MCF 10A (cell line): ENCODE measurements at regions of chr12 and their contacts with region 1.

Region 1: DNA sequence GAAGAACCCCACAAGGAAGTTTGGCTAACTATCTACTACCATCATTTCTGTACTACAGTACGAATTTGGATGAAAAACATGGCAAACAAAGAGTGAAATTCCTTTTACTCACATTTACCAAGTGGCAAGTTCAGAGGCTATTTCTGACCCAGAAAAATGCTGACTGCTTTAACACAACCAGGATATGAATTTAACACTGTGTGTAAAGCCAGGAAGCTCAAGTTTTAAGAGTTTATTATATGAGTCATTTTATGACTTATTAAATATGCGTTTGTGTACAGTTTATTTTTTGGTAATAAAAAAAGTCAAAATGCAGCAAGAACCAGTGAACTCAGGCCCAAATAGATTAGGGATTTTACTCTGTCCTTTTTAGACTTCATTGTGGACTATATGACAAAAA is 58.4 kb upstream of the STAC3 start:
- DNase-seq: no peak
- H3K4me3 Mint-ChIP-seq: no peak overlapping the region
- H3K27ac Mint-ChIP-seq: peak overlapping the region; percentile 66
- H3K4me1 Mint-ChIP-seq: peaks cover 13% of the 10 kb centered on the region
- H3K27me3 Mint-ChIP-seq: no peaks in the 10 kb centered on the region
- CTCF ChIP-seq: no peak

Region 2: DNA sequence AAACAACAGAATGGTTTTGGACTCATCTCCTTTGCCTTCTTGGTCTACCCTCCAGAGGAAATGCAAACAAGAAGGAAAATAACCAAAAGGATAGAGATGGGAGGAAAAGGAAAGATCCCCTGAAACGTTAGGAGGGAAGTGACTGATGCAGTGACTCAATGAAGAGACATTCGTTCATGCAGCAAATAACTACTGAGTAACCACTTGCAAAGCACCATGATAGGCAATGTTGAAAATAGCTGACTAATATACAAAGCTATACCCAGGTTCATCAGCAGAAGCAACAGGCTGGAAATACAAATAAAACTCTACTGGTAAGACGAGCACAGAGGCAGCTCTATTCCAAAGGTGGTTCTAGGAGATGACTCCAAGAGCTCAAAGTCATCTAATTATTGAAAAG is 79.6 kb after region 1 on chr12:
- CTCF ChIA-PET with region 1: interaction called, 10 read pairs
- POLR2A ChIA-PET with region 1: no interaction called
- intact Hi-C with region 1: no loop called
- DNase-seq: peak; percentile 53
- H3K4me3 Mint-ChIP-seq: no peak overlapping the region
- H3K27ac Mint-ChIP-seq: no peak overlapping the region
- H3K4me1 Mint-ChIP-seq: peaks cover 15% of the 10 kb centered on the region
- H3K27me3 Mint-ChIP-seq: no peaks in the 10 kb centered on the region
- CTCF ChIP-seq: no peak